Endothelial cell of umbilical vein (primary cell): ENCODE measurements at regions of chr15 and their contacts with region 1.

Region 1: GRCh38 chr15:85412956-85413854 is 32.8 kb downstream of the AKAP13 start:
- DNase-seq: peak; percentile 98
- H3K4me3 ChIP-seq: no peak overlapping the region
- H3K27ac ChIP-seq: peak overlapping the region; percentile 77
- H3K4me1 ChIP-seq: peaks cover 38% of the 10 kb centered on the region
- H3K27me3 ChIP-seq: no peaks in the 10 kb centered on the region
- CTCF ChIP-seq: no peak
- POLR2A ChIP-seq: no peak

Region 2: DNA sequence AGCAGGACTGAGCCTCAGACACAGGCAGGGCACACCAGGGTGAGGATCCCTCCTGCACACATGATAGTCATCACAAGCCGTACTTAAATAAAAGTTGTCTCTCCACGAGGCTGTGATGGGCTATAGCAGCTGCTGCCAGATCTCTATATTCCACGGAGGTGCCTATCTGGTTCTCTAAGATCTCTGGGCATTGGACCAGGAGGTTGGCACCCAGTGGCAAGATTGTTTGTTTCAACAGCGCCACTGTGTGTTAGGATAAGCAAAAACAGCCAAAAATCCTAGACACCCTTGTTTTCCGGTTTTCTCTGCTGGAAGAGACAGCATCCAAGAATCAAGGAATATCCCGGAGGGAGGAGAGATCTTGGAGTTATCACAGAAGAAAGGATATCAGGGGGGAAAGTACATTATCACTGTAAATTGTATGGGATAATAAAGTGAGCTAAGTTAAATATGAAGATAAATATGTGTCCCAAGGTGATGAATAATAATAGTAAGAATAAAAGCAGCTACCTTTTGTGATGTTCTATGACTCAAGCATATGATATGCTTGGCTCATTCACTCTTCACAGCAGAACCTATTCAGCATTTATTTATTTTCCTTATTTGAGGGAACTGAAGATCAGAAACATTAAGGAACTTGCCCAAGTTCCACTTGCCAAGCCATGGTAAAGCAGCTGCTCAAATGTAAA is 123.4 kb before region 1 on chr15:
- CTCF ChIA-PET with region 1: interaction called, 11 read pairs
- POLR2A ChIA-PET with region 1: no interaction called
- dilution Hi-C with region 1: no loop called
- intact Hi-C with region 1: no loop called
- DNase-seq: peak; percentile 46
- H3K4me3 ChIP-seq: no peak overlapping the region
- H3K27ac ChIP-seq: no peak overlapping the region
- H3K4me1 ChIP-seq: no peaks in the 10 kb centered on the region
- H3K27me3 ChIP-seq: peaks cover 10 to 18% of the 10 kb centered on the region in 2 experiments
- CTCF ChIP-seq: peak; percentile 45 to 49
- POLR2A ChIP-seq: no peak

Region 3: DNA sequence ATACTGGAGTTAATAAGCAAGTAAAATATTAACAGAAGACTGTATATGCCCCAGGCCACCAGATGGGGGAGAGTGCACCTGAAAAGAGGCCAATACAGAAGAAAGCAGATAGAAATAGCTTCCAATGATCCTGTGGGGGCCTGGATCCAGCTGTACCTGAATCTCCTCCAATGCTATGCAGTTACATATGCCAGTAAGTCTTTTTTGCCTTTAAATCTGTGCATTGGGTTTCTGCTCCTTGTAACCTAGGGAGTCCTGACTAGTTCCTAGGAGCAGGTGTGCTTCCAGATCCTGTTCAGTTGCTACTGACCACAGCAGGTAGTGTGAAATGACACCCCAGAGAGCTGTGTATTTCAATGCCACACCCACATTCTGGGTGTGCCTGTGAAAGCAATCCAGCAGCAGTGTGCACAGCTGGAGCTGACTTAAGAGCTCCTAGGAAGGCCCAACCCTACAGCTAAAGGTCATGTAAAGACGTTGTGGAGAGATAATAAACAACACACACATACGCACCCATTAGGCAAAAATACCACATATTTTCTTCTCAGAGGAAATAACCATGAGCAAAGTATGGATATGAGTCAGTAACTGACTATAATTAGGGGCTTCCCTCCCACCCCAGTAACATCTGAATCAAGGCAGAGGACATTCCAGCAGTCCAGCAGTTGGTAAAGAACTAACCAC is 95.0 kb before region 1 on chr15:
- CTCF ChIA-PET with region 1: interaction called, 12 read pairs
- POLR2A ChIA-PET with region 1: no interaction called
- dilution Hi-C with region 1: no loop called
- intact Hi-C with region 1: loop called (anchors 1 kb)
- DNase-seq: peak; percentile 74
- H3K4me3 ChIP-seq: no peak overlapping the region
- H3K27ac ChIP-seq: peak overlapping the region; percentile 64
- H3K4me1 ChIP-seq: peaks cover 15% of the 10 kb centered on the region
- H3K27me3 ChIP-seq: no peaks in the 10 kb centered on the region
- CTCF ChIP-seq: peak in 1 of 2 donors; percentile 16
- POLR2A ChIP-seq: no peak

Region 4: DNA sequence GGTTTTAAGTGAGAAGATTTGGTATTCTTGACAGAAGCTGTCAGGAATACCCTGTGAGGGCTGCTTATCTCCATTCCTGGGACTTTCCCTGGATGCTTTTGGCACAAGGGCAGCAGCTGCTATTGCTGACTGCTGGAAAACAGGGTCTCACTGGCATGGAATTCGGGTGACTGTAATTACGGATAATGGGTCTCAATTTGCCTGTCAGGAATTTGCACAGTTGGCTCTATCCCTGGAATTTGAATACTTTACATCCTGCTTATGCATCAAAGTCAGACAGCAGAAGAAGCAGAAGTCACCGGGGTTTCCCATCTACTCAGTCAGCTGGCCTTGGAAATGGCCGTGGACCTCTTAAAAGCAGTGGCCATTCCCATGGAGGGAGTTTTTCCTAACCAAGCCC is 58.7 kb before region 1 on chr15:
- CTCF ChIA-PET with region 1: no interaction called
- POLR2A ChIA-PET with region 1: no interaction called
- dilution Hi-C with region 1: no loop called
- intact Hi-C with region 1: no loop called
- DNase-seq: peak; percentile 77
- H3K4me3 ChIP-seq: no peak overlapping the region
- H3K27ac ChIP-seq: no peak overlapping the region
- H3K4me1 ChIP-seq: peaks cover 17% of the 10 kb centered on the region
- H3K27me3 ChIP-seq: no peaks in the 10 kb centered on the region
- CTCF ChIP-seq: no peak
- POLR2A ChIP-seq: no peak

Region 5: GRCh38 chr15:85380217-85380811 is 32.9 kb before region 1 on chr15 and contains the start of gene AKAP13:
- CTCF ChIA-PET with region 1: interaction called, 24 read pairs
- POLR2A ChIA-PET with region 1: interaction called, 10 read pairs
- dilution Hi-C with region 1: no loop called
- intact Hi-C with region 1: loop called (anchors 1 kb)
- DNase-seq: peak; percentile 99
- H3K4me3 ChIP-seq: peak within 1 kb of the TSS; percentile 57 to 79 (median 78)
- H3K27ac ChIP-seq: peak within 1 kb of the TSS; percentile 56
- H3K4me1 ChIP-seq: peaks cover 8% of the 10 kb centered on the region
- H3K27me3 ChIP-seq: no peaks in the 10 kb centered on the region
- CTCF ChIP-seq: no peak
- POLR2A ChIP-seq: peak; percentile 54
- total RNA-seq, gene AKAP13: 80.3 and 87.8 TPM in 2 replicates

Region 6: DNA sequence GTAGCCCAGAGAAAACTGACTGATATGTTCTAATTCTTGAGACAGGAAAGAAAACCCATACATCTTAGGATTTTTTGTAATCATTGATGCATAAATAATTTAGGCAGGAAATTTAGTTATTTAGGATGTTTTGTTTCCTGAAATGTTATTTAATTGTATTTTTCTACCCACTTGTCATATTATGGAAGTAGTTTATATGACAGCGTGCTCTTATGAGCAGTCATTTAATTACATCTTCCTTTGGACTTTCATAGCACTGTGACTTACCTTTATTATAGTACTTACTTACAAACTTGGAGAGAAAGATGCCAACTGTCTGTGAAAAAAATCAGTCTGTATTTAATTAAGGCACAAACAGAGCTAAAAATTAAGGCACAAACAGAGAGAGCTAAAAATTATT is 32.2 kb after region 1 on chr15:
- CTCF ChIA-PET with region 1: interaction called, 7 read pairs
- POLR2A ChIA-PET with region 1: no interaction called
- dilution Hi-C with region 1: no loop called
- intact Hi-C with region 1: loop called (anchors 1 kb)
- DNase-seq: no peak
- H3K4me3 ChIP-seq: no peak overlapping the region
- H3K27ac ChIP-seq: no peak overlapping the region
- H3K4me1 ChIP-seq: no peaks in the 10 kb centered on the region
- H3K27me3 ChIP-seq: no peaks in the 10 kb centered on the region
- CTCF ChIP-seq: no peak
- POLR2A ChIP-seq: no peak

Region 7: DNA sequence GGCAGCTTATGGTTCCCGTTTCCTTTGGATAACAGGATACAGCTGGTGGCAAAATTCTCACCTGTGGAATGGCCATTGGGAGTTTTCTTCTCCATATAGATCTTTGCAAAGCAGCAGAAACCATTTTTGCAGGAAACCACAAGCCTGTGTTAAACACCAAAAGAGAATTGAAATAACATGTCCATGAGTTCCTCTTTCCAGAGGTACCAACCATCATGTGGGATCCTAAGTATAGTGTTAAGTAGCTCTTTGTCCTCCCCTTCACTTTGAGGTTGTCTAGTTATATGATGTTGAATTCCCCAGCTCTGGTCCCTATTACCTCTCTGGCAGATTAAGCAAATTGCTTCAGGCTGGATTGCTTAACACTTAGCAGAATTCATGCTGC is 62.1 kb after region 1 on chr15:
- CTCF ChIA-PET with region 1: interaction called, 16 read pairs
- POLR2A ChIA-PET with region 1: no interaction called
- dilution Hi-C with region 1: no loop called
- intact Hi-C with region 1: loop called (anchors 2 kb)
- DNase-seq: peak; percentile 63
- H3K4me3 ChIP-seq: no peak overlapping the region
- H3K27ac ChIP-seq: no peak overlapping the region
- H3K4me1 ChIP-seq: peaks cover 40% of the 10 kb centered on the region
- H3K27me3 ChIP-seq: no peaks in the 10 kb centered on the region
- CTCF ChIP-seq: no peak
- POLR2A ChIP-seq: no peak

Region 8: DNA sequence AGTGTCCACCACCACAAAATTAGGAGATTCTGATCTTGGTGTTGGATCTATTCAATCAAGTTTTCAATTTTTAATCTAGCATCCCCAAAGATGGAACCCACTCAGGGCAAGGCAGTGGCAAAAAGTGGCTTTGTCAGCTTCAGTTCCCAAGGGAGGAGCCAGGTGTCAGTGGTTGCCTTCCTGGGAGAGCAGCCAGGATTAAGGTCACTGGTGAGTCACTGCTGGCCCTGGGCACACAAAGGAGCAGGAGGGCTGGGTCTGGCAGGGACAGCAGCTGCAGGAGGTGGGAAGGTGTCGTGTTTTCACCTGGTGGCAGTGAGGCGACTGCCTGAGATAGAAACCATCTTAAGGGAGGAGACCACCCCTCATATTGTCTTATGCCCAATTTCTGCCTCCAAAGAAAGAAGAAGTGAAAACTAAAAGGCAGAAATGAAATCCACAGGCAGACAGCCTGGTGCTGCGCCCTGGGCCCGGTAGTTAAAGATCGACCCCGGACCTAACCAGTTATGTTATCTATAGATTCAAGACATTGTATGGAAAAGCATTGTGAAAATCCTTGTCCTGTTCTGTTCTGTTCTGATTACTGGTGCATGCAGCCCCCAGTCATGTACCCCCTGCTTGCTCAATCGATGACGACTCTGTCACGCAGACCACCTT is 387.4 kb after region 1 on chr15:
- CTCF ChIA-PET with region 1: no interaction called
- POLR2A ChIA-PET with region 1: no interaction called
- dilution Hi-C with region 1: no loop called
- intact Hi-C with region 1: no loop called
- DNase-seq: no peak
- H3K4me3 ChIP-seq: no peak overlapping the region
- H3K27ac ChIP-seq: no peak overlapping the region
- H3K4me1 ChIP-seq: peaks cover under 1% of the 10 kb centered on the region
- H3K27me3 ChIP-seq: peaks cover 2% of the 10 kb centered on the region in 2 experiments
- CTCF ChIP-seq: no peak
- POLR2A ChIP-seq: no peak